K562 (cell line): ENCODE measurements at regions of chr19 and their contacts with region 1.

Region 1: GRCh38 chr19:11881151-11881800 is 6.3 kb upstream of the ZNF69 start:
- DNase-seq: peak; percentile 56 to 77 (median 64)
- ATAC-seq: peak; percentile 87
- H3K4me3 ChIP-seq: no peak overlapping the region
- H3K27ac ChIP-seq: no peak overlapping the region
- H3K4me1 ChIP-seq: no peaks in the 10 kb centered on the region
- H3K27me3 ChIP-seq: no peaks in the 10 kb centered on the region; a peak in 2 of 5 replicates
- CTCF ChIP-seq: peak; percentile 75 to 81 (median 81)
- EP300 ChIP-seq: no peak
- POLR2A ChIP-seq: no peak
- RAD21 ChIP-seq: peak; percentile 72 to 90

Region 2: DNA sequence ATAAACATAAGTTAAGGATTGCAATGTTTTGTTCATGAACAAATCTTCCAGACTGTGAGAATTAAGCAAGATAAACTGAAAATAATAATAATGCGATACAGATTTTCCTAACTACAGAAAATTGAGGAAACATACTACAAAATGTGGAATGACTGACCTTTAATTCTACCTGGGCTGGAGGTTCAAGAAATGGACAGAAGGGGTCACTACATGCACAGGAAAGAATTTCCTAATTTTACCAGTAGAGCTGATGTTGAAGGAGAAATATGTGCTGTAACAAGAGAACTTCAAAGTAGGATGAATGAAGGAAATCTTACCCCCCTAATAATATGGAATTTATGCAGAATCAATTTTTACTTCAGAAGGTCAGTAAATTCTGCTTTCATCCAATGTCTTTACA is 221.7 kb before region 1 on chr19:
- CTCF ChIA-PET with region 1: no interaction called
- POLR2A ChIA-PET with region 1: no interaction called
- in situ Hi-C with region 1: no loop called
- intact Hi-C with region 1: loop called (anchors 2 kb)
- DNase-seq: peak; percentile 37 to 47 (median 42)
- ATAC-seq: peak; percentile 64; the same call in 2 of the 3 replicates
- H3K4me3 ChIP-seq: no peak overlapping the region
- H3K27ac ChIP-seq: no peak overlapping the region
- H3K4me1 ChIP-seq: peaks cover 4 to 7% of the 10 kb centered on the region in 2 experiments; a peak in 3 of 5 replicates
- H3K27me3 ChIP-seq: no peaks in the 10 kb centered on the region
- CTCF ChIP-seq: peak; percentile 46 to 65 (median 59); a peak in 5 of 6 replicates
- EP300 ChIP-seq: no peak
- POLR2A ChIP-seq: no peak
- RAD21 ChIP-seq: peak; percentile 38 to 62

Region 3: DNA sequence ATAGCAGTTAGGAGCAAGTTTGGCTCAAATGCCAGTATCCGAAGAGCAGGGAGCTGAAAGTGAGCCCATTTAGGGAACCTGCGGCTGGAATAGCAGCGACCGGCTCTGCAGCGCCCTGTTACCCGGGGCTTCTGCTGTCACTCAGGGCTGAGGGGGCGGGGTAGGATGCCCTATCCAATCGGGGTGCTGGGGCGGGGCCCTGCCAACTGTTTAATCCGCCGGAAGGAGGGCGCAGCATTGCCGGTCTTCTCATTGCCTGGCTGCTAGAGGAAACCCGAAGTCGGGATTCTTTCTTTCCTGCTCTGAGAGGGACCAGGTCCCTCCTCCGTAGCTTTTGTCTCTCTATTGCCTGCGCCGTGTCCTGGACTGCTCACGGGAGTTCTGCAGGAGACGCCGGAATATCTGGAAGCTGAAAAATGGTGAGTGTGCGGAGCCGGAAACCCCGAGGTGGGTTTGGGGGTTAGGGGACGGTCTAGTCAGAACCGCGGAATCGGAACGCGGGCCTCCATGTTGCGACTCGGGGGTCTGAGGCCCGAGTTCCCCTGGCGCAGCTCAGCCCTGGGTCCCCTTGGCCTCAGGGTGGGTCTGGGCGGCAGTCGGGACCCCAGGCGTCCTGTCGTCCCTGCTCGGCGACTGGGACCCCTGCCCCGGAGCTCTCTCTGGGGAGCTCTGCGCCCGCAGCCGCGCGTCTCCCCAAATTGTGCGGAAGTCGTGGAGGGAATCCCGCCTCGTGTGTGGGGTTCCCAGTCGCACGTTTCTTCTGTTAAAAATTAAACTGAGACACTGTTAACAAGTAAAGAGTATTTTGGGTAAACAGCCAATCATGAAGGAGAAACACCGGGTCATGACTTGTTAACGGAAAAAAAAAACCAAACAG is 106.4 kb after region 1 on chr19:
- CTCF ChIA-PET with region 1: interaction called, 8 read pairs
- POLR2A ChIA-PET with region 1: no interaction called
- in situ Hi-C with region 1: loop called (anchors 5 kb)
- intact Hi-C with region 1: loop called (anchors 2 kb)
- DNase-seq: peak; percentile 79 to 85 (median 82)
- ATAC-seq: peak; percentile 98
- H3K4me3 ChIP-seq: peak overlapping the region; percentile 54
- H3K27ac ChIP-seq: peak overlapping the region; percentile 77
- H3K4me1 ChIP-seq: peaks cover 0 to 3% of the 10 kb centered on the region in 2 experiments; a peak in 2 of 5 replicates
- H3K27me3 ChIP-seq: no peaks in the 10 kb centered on the region
- CTCF ChIP-seq: no peak
- EP300 ChIP-seq: no peak
- POLR2A ChIP-seq: peak; percentile 76
- RAD21 ChIP-seq: no peak

Region 4: GRCh38 chr19:12055783-12056182 is 174.5 kb after region 1 on chr19:
- CTCF ChIA-PET with region 1: no interaction called
- POLR2A ChIA-PET with region 1: no interaction called
- in situ Hi-C with region 1: no loop called
- intact Hi-C with region 1: loop called (anchors 2 kb)
- DNase-seq: no peak
- ATAC-seq: no peak
- H3K4me3 ChIP-seq: no peak overlapping the region
- H3K27ac ChIP-seq: no peak overlapping the region
- H3K4me1 ChIP-seq: peaks cover 0 to 13% of the 10 kb centered on the region in 2 experiments; a peak in 2 of 5 replicates
- H3K27me3 ChIP-seq: no peaks in the 10 kb centered on the region
- CTCF ChIP-seq: no peak
- EP300 ChIP-seq: no peak
- POLR2A ChIP-seq: no peak
- RAD21 ChIP-seq: no peak